ENCODE measurements at regions of chr17 and their contacts with region 1.

Region 1: DNA sequence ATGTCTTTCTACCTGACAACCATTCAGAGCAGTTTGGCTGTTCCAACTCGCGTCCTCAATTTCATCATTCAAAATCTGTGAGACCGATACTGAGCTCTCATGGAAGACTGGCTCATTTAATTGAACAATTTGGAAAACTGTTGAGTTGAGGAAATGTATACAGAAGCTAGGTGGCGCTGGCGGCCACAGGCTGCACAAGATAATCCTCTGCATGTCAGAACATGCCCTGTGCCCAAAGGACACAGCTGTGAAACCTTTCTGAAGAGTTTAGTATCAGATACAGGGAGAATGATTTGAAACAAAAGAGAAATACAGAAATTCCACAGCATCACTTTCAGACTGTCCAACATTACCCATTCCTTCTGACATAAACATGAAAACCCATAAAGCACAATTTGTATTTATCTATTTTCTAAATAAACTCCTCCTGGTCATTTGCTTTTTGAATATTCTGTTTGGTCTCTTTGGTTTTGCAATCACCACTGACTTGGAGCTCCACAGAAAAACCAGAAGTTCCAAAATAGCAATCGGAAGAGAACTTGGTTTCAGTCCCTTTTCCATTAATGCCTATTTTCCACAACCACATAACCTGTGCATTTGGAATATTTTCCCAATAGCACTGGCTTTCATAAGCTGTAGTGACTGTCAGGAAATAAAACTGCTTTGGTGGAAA is 192.8 kb downstream of the MAP2K6 start:
- DNase-seq: peak; percentile 71
- H3K4me3 ChIP-seq: no peak overlapping the region
- H3K27ac ChIP-seq: peak overlapping the region; percentile 40
- H3K27me3 ChIP-seq: no peaks in the 10 kb centered on the region
- CTCF ChIP-seq: peak; percentile 89

Region 2: GRCh38 chr17:69567130-69567529 is 40.2 kb before region 1 on chr17:
- CTCF ChIA-PET with region 1: interaction called, 58 read pairs
- POLR2A ChIA-PET with region 1: interaction called, 3 read pairs
- DNase-seq: no peak
- H3K4me3 ChIP-seq: no peak overlapping the region
- H3K27ac ChIP-seq: no peak overlapping the region
- H3K27me3 ChIP-seq: no peaks in the 10 kb centered on the region
- CTCF ChIP-seq: no peak

Region 3: DNA sequence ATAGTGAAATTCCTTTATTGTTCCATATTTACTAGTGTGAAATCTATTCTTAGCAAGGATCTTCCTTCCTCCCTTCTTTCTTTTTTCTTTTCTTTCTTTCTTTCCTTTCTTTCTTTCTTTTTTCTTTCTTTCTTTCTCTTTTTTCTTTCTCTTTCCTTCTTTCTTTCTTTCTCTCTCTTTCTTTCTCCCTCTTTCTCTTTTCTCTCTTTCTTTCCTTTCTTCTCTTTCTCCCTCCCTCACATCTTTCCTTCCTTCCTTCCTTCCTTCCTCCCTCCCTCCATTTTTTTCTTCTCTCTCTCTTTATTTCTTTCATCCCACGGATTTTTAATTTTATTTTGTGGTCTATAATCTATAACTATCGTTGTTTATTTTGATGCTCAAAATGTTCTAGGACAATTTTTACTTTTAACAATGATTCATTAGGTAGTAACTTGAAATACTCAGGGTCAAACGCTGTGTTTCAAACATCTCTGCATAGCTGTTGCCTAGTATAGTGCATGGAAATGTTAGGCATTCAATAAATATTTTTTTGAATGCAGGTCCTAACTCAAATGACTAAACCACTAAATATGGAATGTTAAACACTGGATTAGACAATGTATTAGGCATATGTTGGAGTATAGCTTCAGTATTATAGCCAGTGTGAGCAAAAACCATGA is 14.5 kb before region 1 on chr17:
- CTCF ChIA-PET with region 1: interaction called, 103 read pairs
- POLR2A ChIA-PET with region 1: interaction called, 32 read pairs
- DNase-seq: peak; percentile 65
- H3K4me3 ChIP-seq: no peak overlapping the region
- H3K27ac ChIP-seq: no peak overlapping the region
- H3K27me3 ChIP-seq: no peaks in the 10 kb centered on the region
- CTCF ChIP-seq: no peak

Region 4: GRCh38 chr17:69761751-69762321 is 154.5 kb after region 1 on chr17:
- CTCF ChIA-PET with region 1: interaction called, 23 read pairs
- POLR2A ChIA-PET with region 1: interaction called, 9 read pairs
- DNase-seq: peak; percentile 93
- H3K4me3 ChIP-seq: no peak overlapping the region
- H3K27ac ChIP-seq: peak overlapping the region; percentile 90
- H3K27me3 ChIP-seq: no peaks in the 10 kb centered on the region
- CTCF ChIP-seq: no peak

Region 5: GRCh38 chr17:70137451-70138230 is 530.3 kb after region 1 on chr17:
- CTCF ChIA-PET with region 1: interaction called, 103 read pairs
- POLR2A ChIA-PET with region 1: interaction called, 8 read pairs
- DNase-seq: peak; percentile 93
- H3K4me3 ChIP-seq: peak overlapping the region; percentile 37
- H3K27ac ChIP-seq: peak overlapping the region; percentile 91
- H3K27me3 ChIP-seq: no peaks in the 10 kb centered on the region
- CTCF ChIP-seq: no peak

Region 6: DNA sequence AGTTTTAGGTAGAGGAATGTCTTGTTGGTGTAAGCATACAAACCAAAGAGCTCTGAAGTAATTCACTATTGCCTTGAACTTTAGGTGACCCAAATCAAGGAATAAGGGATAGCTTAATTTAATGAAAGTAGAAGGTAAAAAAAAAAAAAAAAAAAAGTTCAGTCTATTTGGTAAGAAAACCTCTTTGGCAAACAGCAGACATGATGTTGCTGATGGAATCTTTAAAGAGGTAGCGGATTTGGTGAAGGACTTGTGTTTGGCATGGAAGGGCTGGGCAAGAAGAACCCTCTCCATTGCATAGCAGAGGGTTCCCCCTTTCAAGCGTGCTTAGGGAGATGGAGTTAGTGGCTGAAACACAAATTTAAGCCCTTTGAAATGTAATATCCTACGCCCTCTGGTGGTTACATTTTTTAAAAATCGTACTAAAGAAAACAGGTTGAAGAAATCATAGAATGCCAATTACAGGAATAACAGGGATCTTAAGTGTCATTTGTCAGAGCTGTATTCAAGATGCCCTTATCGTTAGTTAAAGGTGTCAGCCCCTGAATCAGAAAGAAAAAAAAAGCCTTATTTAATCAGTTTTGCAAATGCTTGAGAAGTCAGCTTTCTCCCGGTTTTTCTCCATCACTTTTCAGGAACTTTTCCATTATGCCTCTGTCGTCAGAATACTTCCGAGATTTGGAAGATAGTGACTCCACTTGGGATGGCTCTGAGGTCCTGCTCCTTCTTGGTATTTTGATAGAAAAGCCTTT is 945.1 kb after region 1 on chr17:
- CTCF ChIA-PET with region 1: interaction called, 31 read pairs
- POLR2A ChIA-PET with region 1: no interaction called
- DNase-seq: no peak
- H3K4me3 ChIP-seq: no peak overlapping the region
- H3K27ac ChIP-seq: no peak overlapping the region
- H3K27me3 ChIP-seq: peaks cover 2% of the 10 kb centered on the region
- CTCF ChIP-seq: peak; percentile 51

Measured in AG04450 (cell line).